ENCODE measurements at regions of chr1 and their contacts with region 1.

Region 1: GRCh38 chr1:17485280-17485679 is 45.8 kb upstream of the RCC2 start:
- DNase-seq: peak; percentile 13
- H3K4me3 ChIP-seq: no peak overlapping the region
- H3K27ac ChIP-seq: no peak overlapping the region
- H3K4me1 ChIP-seq: peaks cover 4% of the 10 kb centered on the region
- CTCF ChIP-seq: peak; percentile 52

Region 2: GRCh38 chr1:17304151-17304825 is 181.0 kb before region 1 on chr1:
- CTCF ChIA-PET with region 1: no interaction called
- POLR2A ChIA-PET with region 1: no interaction called
- intact Hi-C with region 1: no loop called
- DNase-seq: no peak
- H3K4me3 ChIP-seq: no peak overlapping the region
- H3K27ac ChIP-seq: no peak overlapping the region
- H3K4me1 ChIP-seq: no peaks in the 10 kb centered on the region
- CTCF ChIP-seq: no peak

Region 3: GRCh38 chr1:17419626-17420328 is 65.5 kb before region 1 on chr1:
- CTCF ChIA-PET with region 1: no interaction called
- POLR2A ChIA-PET with region 1: no interaction called
- intact Hi-C with region 1: loop called (anchors 5 kb)
- DNase-seq: peak; percentile 34
- H3K4me3 ChIP-seq: no peak overlapping the region
- H3K27ac ChIP-seq: no peak overlapping the region
- H3K4me1 ChIP-seq: no peaks in the 10 kb centered on the region
- CTCF ChIP-seq: peak; percentile 97

Measured in OCI-LY7 (cell line).